Endothelial cell of umbilical vein (primary cell): ENCODE measurements at regions of chr6 and their contacts with region 1.

Region 1: DNA sequence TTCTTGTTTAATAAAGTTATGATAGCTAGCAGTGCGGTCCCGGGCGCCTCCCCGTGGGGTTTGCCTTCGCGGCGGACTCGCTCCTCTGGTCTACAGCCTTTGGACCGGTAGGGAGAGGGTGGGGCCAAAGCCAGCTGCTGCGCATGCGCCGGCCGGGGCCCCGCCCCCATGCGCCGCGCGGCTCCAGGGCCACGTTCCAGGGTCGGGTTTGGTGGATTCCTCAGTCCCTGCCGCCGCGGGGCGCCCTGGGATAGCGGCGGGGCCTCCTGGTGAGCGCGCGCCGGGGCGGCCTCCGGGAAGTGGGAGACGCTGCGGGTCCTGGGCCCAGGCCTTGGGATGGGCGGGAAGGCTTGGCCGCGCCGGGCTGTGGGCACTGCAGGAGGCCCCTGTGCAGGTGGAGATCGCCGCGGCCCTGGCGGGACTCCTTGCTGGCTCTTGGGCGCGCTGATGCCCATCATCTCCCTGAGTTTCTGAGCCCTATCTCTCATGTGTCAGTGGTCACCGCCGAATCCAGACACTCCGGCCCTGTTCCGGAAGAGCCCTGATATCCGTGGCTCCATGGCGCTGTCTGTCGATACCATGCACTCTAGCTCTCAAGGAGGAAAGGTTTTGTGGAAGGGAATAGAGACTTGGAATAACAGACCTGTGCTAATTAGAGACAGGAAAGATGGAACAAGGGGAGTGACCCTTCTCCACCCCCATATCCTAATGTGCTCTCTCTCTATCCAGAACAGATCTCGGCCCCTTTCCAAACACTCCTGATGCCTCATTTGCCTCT is at the start of gene VARS2:
- DNase-seq: peak; percentile 95
- H3K4me3 ChIP-seq: peak within 1 kb of the TSS; percentile 37 to 54 (median 44)
- H3K27ac ChIP-seq: peak within 1 kb of the TSS; percentile 67
- H3K4me1 ChIP-seq: peaks cover 25% of the 10 kb centered on the region
- H3K27me3 ChIP-seq: no peaks in the 10 kb centered on the region
- CTCF ChIP-seq: peak in 1 of 2 donors; percentile 41
- POLR2A ChIP-seq: peak; percentile 91
- total RNA-seq, gene VARS2: 32.5 and 34.3 TPM in 2 replicates

Region 2: GRCh38 chr6:30678964-30679726 is 235.1 kb before region 1 on chr6:
- CTCF ChIA-PET with region 1: interaction called, 14 read pairs
- POLR2A ChIA-PET with region 1: no interaction called
- dilution Hi-C with region 1: no loop called
- intact Hi-C with region 1: no loop called
- DNase-seq: peak; percentile 85
- H3K4me3 ChIP-seq: peak overlapping the region in 2 of 3 experiments; percentile 8 to 27
- H3K27ac ChIP-seq: peak overlapping the region; percentile 2
- H3K4me1 ChIP-seq: peaks cover 31% of the 10 kb centered on the region
- H3K27me3 ChIP-seq: no peaks in the 10 kb centered on the region
- CTCF ChIP-seq: peak; percentile 95 to 96
- POLR2A ChIP-seq: no peak

Region 3: GRCh38 chr6:31042806-31043205 is 128.5 kb after region 1 on chr6:
- CTCF ChIA-PET with region 1: interaction called, 13 read pairs
- POLR2A ChIA-PET with region 1: no interaction called
- dilution Hi-C with region 1: no loop called
- intact Hi-C with region 1: loop called (anchors 1 kb)
- DNase-seq: peak; percentile 38
- H3K4me3 ChIP-seq: no peak overlapping the region
- H3K27ac ChIP-seq: no peak overlapping the region
- H3K4me1 ChIP-seq: no peaks in the 10 kb centered on the region
- H3K27me3 ChIP-seq: peaks cover 8 to 12% of the 10 kb centered on the region in 2 experiments
- CTCF ChIP-seq: peak; percentile 23 to 69
- POLR2A ChIP-seq: no peak

Region 4: DNA sequence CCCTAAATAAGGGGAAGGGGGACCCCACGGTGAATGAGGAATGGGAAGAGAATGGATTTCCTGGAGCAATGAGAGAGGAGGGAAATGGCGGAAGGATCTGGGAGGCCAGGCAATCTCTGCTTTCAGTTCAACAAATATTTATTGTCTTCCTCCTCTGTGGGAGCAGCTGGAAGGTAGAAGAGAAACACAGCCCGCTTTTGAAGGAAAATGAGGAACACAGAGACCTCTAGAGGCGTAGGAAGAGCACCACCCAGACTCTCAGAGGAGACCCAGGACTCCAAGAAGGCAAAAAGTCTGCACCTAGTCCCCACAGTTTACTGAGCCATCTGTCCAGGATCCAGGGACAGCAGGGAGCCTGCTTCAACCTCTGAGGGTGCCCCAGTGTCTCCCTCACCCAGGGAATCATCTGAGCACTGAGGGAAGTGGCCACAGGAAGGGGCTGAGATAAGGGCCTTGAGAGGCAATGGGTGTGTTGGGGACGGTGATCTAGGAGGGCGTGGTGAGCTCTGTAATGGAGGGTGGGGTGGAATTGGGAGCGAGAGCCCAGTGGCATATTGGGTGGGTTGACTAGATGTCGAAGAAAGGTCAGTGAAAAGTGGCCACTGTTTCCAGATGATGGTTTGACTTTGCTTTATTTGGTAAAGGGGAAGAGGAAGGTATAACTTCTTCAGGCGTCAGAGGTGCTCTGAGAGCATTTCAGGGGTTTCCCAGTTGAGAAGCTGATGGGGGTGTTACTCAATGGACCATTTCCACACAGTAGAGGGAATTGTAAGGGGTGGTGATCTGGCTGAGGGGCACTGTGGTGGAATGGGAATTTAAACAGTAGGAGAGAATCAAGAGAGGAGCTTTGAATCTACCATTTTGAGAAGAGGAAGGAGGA is 200.9 kb after region 1 on chr6:
- CTCF ChIA-PET with region 1: interaction called, 14 read pairs
- POLR2A ChIA-PET with region 1: no interaction called
- dilution Hi-C with region 1: no loop called
- intact Hi-C with region 1: no loop called
- DNase-seq: peak; percentile 51
- H3K4me3 ChIP-seq: peak overlapping the region in 1 of 3 experiments; percentile 3
- H3K27ac ChIP-seq: peak overlapping the region; percentile 51
- H3K4me1 ChIP-seq: peaks cover 21% of the 10 kb centered on the region
- H3K27me3 ChIP-seq: peaks cover 4 to 6% of the 10 kb centered on the region in 2 experiments
- CTCF ChIP-seq: peak; percentile 13 to 20
- POLR2A ChIP-seq: no peak

Region 5: DNA sequence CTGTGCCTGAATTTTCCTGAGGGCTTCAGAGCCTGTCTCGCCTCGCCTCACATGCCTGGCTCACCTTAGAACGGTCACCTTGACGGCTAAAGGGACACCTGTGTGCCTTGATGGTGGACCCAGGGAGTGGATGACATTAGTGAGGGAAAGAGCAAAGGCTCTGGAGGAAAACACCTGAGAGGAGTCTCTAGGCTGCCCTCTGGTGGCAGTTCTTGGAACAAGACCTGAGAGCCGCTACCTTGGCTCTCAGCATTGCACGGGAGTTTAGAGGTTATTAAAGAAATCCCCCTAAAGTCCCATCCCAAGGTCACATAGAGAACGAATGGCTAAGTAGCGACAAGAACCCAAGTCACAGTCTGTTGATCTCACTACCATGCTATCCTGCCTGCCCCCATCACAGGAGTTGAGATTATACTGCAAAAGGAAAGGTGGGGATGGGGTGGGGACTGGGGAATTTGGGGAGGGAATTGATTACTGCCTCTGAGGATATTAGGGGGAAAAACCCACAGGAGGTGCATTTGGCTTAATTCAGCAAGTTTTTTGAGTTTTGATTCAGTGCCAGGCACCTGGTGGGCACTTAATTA is 213.9 kb after region 1 on chr6:
- CTCF ChIA-PET with region 1: interaction called, 26 read pairs
- POLR2A ChIA-PET with region 1: no interaction called
- dilution Hi-C with region 1: no loop called
- intact Hi-C with region 1: loop called (anchors 1 kb)
- DNase-seq: peak; percentile 47
- H3K4me3 ChIP-seq: no peak overlapping the region
- H3K27ac ChIP-seq: no peak overlapping the region
- H3K4me1 ChIP-seq: peaks cover 23% of the 10 kb centered on the region
- H3K27me3 ChIP-seq: peaks cover 3 to 6% of the 10 kb centered on the region in 2 experiments
- CTCF ChIP-seq: peak; percentile 80 to 89
- POLR2A ChIP-seq: no peak

Region 6: DNA sequence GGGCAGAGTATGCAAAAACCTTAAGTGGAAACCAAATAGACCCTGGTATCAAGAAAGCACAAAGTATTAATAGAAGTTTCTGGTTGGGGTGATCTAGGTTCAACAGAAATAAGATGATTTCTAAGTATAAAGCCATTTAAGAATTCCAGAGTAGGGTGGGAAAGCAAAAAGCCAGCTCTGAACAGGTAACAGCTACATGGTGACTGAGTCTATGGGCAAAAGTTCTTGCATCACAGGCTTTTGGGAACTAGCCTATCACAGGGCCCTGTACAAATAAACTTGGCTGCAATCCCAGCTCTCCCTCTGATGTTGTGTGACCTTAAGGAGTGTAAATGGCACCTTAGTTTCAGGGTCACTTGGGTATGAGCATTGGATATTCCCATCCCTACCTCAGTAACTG is 249.7 kb after region 1 on chr6:
- CTCF ChIA-PET with region 1: no interaction called
- POLR2A ChIA-PET with region 1: no interaction called
- dilution Hi-C with region 1: no loop called
- intact Hi-C with region 1: no loop called
- DNase-seq: no peak
- H3K4me3 ChIP-seq: no peak overlapping the region
- H3K27ac ChIP-seq: no peak overlapping the region
- H3K4me1 ChIP-seq: peaks cover 9% of the 10 kb centered on the region
- H3K27me3 ChIP-seq: no peaks in the 10 kb centered on the region
- CTCF ChIP-seq: no peak
- POLR2A ChIP-seq: no peak

Region 7: GRCh38 chr6:31246050-31246521 is 331.8 kb after region 1 on chr6:
- CTCF ChIA-PET with region 1: no interaction called
- POLR2A ChIA-PET with region 1: no interaction called
- dilution Hi-C with region 1: no loop called
- intact Hi-C with region 1: no loop called
- DNase-seq: peak; percentile 66
- H3K4me3 ChIP-seq: no peak overlapping the region
- H3K27ac ChIP-seq: no peak overlapping the region
- H3K4me1 ChIP-seq: peaks cover 3% of the 10 kb centered on the region
- H3K27me3 ChIP-seq: peaks cover 5 to 22% of the 10 kb centered on the region in 2 experiments
- CTCF ChIP-seq: no peak
- POLR2A ChIP-seq: no peak